Activated B cell treated with CpG ODN at 0.5 μM for 24 hours (primary cell): ENCODE measurements at regions of chr16 and their contacts with region 1.

Region 1: DNA sequence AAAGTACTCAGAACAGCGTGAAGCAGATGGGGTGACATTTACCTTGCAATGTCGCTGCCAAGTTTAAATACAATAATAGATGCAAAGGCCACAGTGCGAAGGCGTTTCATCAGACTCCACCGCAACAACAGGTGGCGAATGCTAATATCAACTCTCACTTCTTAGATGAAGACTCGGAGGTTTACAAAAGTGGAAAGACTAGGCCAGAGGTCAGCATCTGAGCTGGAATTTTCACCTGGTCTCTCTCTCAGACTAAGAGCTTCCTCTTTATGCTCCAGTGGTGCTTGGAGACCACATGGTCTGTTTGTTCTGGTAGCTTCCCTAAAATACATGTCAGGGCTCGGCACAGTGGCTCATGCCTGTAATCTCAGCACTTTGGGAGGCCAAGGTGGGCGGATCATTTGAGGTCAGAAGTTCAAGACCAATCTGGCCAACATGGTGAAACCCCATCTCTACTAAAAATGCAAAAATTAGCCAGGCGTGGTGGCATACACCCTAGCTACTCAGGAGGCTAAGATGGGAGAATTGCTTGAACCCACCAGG is 169.1 kb downstream of the XYLT1 start:
- DNase-seq: peak; percentile 62
- ATAC-seq: peak; percentile 86
- H3K4me3 Mint-ChIP-seq: peak overlapping the region; percentile 58
- H3K27ac Mint-ChIP-seq: peak overlapping the region; percentile 85
- H3K4me1 Mint-ChIP-seq: peaks cover 71% of the 10 kb centered on the region
- H3K27me3 Mint-ChIP-seq: no peaks in the 10 kb centered on the region
- CTCF ChIP-seq: no peak

Region 2: DNA sequence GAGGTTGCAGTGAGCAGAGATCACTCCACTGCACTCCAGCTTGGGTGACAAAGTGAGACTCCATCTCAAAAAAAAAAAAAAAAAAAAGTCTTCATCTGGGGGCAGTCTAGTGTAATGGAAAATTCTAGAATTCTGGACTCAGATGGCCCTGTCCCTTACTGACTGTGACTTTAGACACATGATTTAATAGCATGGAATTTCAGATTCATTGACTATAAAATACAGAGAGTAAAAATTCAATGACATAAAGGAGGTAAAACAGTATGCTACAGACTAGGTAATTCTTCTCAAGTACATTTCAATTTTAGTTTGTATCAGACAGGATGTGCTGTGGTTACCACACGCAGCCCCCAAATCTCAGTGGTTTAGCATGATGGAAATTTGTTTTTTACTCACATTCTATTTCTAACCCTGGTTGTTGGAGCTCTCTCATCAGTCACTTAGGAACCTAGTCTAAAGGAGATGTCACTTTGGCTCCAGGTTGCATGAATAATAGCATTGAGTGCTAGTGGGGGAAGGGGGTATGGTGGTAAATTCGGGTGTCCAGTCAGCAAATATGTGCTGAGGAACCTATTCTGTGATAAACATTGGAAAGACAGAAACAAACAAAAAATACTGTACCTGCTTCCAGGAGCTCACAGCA is 274.9 kb before region 1 on chr16:
- CTCF ChIA-PET with region 1: no interaction called
- POLR2A ChIA-PET with region 1: no interaction called
- intact Hi-C with region 1: loop called (anchors 5 kb)
- DNase-seq: no peak
- ATAC-seq: peak; percentile 62
- H3K4me3 Mint-ChIP-seq: peak overlapping the region; percentile 21
- H3K27ac Mint-ChIP-seq: peak overlapping the region; percentile 81
- H3K4me1 Mint-ChIP-seq: peaks cover 53% of the 10 kb centered on the region
- H3K27me3 Mint-ChIP-seq: no peaks in the 10 kb centered on the region
- CTCF ChIP-seq: no peak

Region 3: GRCh38 chr16:17105239-17105797 is 196.3 kb before region 1 on chr16:
- CTCF ChIA-PET with region 1: no interaction called
- POLR2A ChIA-PET with region 1: no interaction called
- intact Hi-C with region 1: no loop called
- DNase-seq: no peak
- ATAC-seq: no peak
- H3K4me3 Mint-ChIP-seq: no peak overlapping the region
- H3K27ac Mint-ChIP-seq: no peak overlapping the region
- H3K4me1 Mint-ChIP-seq: peaks cover 5% of the 10 kb centered on the region
- H3K27me3 Mint-ChIP-seq: no peaks in the 10 kb centered on the region
- CTCF ChIP-seq: no peak

Region 4: GRCh38 chr16:17277977-17278381 is 23.7 kb before region 1 on chr16:
- CTCF ChIA-PET with region 1: interaction called, 10 read pairs
- POLR2A ChIA-PET with region 1: interaction called, 6 read pairs
- intact Hi-C with region 1: loop called (anchors 1 kb)
- DNase-seq: peak; percentile 25
- ATAC-seq: peak; percentile 55
- H3K4me3 Mint-ChIP-seq: peak overlapping the region; percentile 32
- H3K27ac Mint-ChIP-seq: no peak overlapping the region
- H3K4me1 Mint-ChIP-seq: peaks cover 77% of the 10 kb centered on the region
- H3K27me3 Mint-ChIP-seq: no peaks in the 10 kb centered on the region
- CTCF ChIP-seq: no peak

Region 5: DNA sequence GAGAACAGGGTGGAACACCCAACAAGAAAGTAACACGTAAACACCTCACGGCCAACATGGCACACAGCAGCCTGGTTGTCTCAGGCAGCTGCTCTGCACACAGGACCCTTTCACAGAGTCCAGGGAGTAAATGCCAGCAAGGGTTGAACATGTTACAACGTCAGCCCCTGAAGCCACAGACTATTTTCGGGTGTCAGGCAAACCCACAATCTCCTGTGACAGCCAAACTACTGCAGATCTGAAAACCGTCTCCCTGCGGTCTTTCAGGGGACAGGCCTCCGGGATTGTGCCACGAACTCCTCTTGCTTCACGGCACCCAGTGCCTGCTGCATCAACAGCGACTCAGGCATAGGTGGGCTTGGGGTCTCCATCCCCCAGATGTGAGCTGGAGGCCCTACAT is 41.4 kb after region 1 on chr16:
- CTCF ChIA-PET with region 1: interaction called, 9 read pairs
- POLR2A ChIA-PET with region 1: interaction called, 19 read pairs
- intact Hi-C with region 1: loop called (anchors 1 kb)
- DNase-seq: no peak
- ATAC-seq: peak; percentile 48
- H3K4me3 Mint-ChIP-seq: peak overlapping the region; percentile 57
- H3K27ac Mint-ChIP-seq: peak overlapping the region; percentile 62
- H3K4me1 Mint-ChIP-seq: peaks cover 72% of the 10 kb centered on the region
- H3K27me3 Mint-ChIP-seq: no peaks in the 10 kb centered on the region
- CTCF ChIP-seq: no peak

Region 6: GRCh38 chr16:17369421-17370222 is 68.0 kb after region 1 on chr16:
- CTCF ChIA-PET with region 1: interaction called, 10 read pairs
- POLR2A ChIA-PET with region 1: interaction called, 46 read pairs
- intact Hi-C with region 1: loop called (anchors 2 kb)
- DNase-seq: no peak
- ATAC-seq: peak; percentile 82
- H3K4me3 Mint-ChIP-seq: peak overlapping the region; percentile 80
- H3K27ac Mint-ChIP-seq: peak overlapping the region; percentile 95
- H3K4me1 Mint-ChIP-seq: peaks cover 87% of the 10 kb centered on the region
- H3K27me3 Mint-ChIP-seq: no peaks in the 10 kb centered on the region
- CTCF ChIP-seq: no peak

Region 7: GRCh38 chr16:17467923-17468540 is 166.4 kb after region 1 on chr16:
- CTCF ChIA-PET with region 1: interaction called, 13 read pairs
- POLR2A ChIA-PET with region 1: interaction called, 5 read pairs
- intact Hi-C with region 1: no loop called
- DNase-seq: no peak
- ATAC-seq: no peak
- H3K4me3 Mint-ChIP-seq: peak overlapping the region; percentile 83
- H3K27ac Mint-ChIP-seq: no peak overlapping the region
- H3K4me1 Mint-ChIP-seq: peaks cover 54% of the 10 kb centered on the region
- H3K27me3 Mint-ChIP-seq: no peaks in the 10 kb centered on the region
- CTCF ChIP-seq: no peak